Vagina (tissue), 2 donors: ENCODE measurements at regions of chr16 and their contacts with region 1.

Region 1: GRCh38 chr16:86476956-86477530 is 33.3 kb upstream of the FOXF1 start:
- DNase-seq: no peak
- H3K4me3 ChIP-seq: no peak overlapping the region
- H3K27ac ChIP-seq: peak overlapping the region; percentile 18
- H3K4me1 ChIP-seq: no peaks in the 10 kb centered on the region
- H3K27me3 ChIP-seq: no peaks in the 10 kb centered on the region
- CTCF ChIP-seq: no peak
- POLR2A ChIP-seq: no peak

Region 2: DNA sequence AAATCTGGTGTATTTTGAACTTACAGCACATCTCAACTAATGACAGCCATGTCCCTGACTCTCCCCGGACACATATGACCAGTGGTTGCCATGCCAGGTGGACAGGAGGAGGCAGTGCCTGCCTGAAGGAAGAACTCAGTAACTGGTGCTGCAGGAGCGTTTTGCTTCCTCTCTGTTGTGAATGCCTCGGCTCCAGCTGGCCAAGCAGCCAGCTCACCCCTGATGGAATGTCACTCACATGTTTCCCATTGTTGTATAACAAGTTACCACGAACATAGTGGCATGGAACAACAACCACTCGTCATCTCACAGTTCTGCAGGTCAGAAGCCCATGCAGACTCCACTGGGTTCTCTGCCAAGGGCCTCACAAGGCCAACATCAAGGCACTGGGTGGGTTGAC is 598.2 kb before region 1 on chr16:
- intact Hi-C with region 1: loop called (anchors 10 kb)
- DNase-seq: peak in 1 of 2 donors; percentile 80
- H3K4me3 ChIP-seq: no peak overlapping the region
- H3K27ac ChIP-seq: no peak overlapping the region
- H3K4me1 ChIP-seq: no peaks in the 10 kb centered on the region
- H3K27me3 ChIP-seq: no peaks in the 10 kb centered on the region
- CTCF ChIP-seq: no peak
- POLR2A ChIP-seq: no peak

Region 3: GRCh38 chr16:86414991-86415740 is 61.9 kb before region 1 on chr16:
- intact Hi-C with region 1: no loop called
- DNase-seq: no peak
- H3K4me3 ChIP-seq: no peak overlapping the region
- H3K27ac ChIP-seq: no peak overlapping the region
- H3K4me1 ChIP-seq: no peaks in the 10 kb centered on the region
- H3K27me3 ChIP-seq: no peaks in the 10 kb centered on the region
- CTCF ChIP-seq: no peak
- POLR2A ChIP-seq: no peak

Region 4: GRCh38 chr16:86534779-86535615 is 58.0 kb after region 1 on chr16:
- intact Hi-C with region 1: no loop called
- DNase-seq: no peak
- H3K4me3 ChIP-seq: no peak overlapping the region
- H3K27ac ChIP-seq: no peak overlapping the region
- H3K4me1 ChIP-seq: no peaks in the 10 kb centered on the region
- H3K27me3 ChIP-seq: no peaks in the 10 kb centered on the region
- CTCF ChIP-seq: no peak
- POLR2A ChIP-seq: no peak